ENCODE measurements at regions of chr14 and their contacts with region 1.

Region 1: DNA sequence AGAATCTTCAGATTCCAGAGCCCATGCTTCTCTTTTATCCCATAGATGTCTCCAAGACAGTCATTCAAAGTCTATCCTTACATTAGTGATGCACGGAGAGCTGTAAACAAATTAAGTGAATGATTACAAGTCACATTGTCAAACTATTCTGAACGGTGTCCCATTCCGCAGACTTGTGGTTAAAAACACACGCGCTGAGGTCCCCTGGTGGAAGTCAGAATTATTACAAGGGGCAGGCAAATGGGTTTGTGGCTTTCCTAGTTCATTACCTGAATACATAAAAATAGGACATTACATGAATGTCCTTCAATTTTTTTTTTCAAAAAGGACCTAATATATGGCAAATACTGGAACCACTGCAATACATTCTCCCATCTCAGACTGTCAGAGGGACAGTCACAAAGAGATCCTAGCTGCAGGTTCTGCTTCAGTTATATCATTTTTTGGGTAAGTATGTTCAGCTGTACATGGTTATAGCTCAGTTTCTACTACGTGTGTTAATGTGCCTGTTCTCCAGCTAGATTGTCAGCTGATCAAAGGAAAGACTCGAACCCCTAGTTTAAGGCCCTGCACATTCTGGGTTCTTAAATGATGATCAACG is 53.1 kb upstream of the STON2 start:
- DNase-seq: no peak
- ATAC-seq: peak; percentile 85
- H3K4me3 Mint-ChIP-seq: no peak overlapping the region
- H3K27ac Mint-ChIP-seq: no peak overlapping the region
- H3K4me1 Mint-ChIP-seq: peaks cover 14% of the 10 kb centered on the region
- H3K27me3 Mint-ChIP-seq: peaks cover 18% of the 10 kb centered on the region
- CTCF ChIP-seq: peak; percentile 49

Region 2: GRCh38 chr14:81269100-81269978 is 183.9 kb before region 1 on chr14:
- CTCF ChIA-PET with region 1: interaction called, 42 read pairs
- POLR2A ChIA-PET with region 1: interaction called, 4 read pairs
- intact Hi-C with region 1: loop called (anchors 1 kb)
- DNase-seq: no peak
- ATAC-seq: peak; percentile 62
- H3K4me3 Mint-ChIP-seq: no peak overlapping the region
- H3K27ac Mint-ChIP-seq: no peak overlapping the region
- H3K4me1 Mint-ChIP-seq: no peaks in the 10 kb centered on the region
- H3K27me3 Mint-ChIP-seq: peaks cover 14% of the 10 kb centered on the region
- CTCF ChIP-seq: no peak

Region 3: GRCh38 chr14:81464247-81465002 is 11.2 kb after region 1 on chr14:
- CTCF ChIA-PET with region 1: interaction called, 12 read pairs
- POLR2A ChIA-PET with region 1: no interaction called
- intact Hi-C with region 1: no loop called
- DNase-seq: no peak
- ATAC-seq: peak; percentile 76
- H3K4me3 Mint-ChIP-seq: peak overlapping the region; percentile 81
- H3K27ac Mint-ChIP-seq: peak overlapping the region; percentile 76
- H3K4me1 Mint-ChIP-seq: peaks cover 6% of the 10 kb centered on the region
- H3K27me3 Mint-ChIP-seq: no peaks in the 10 kb centered on the region
- CTCF ChIP-seq: peak; percentile 77